Activated CD4-positive, alpha-beta memory T cell treated with anti-CD3 and anti-CD28 coated beads for 36 hours (primary cell): ENCODE measurements at regions of chr17 and their contacts with region 1.

Region 1: DNA sequence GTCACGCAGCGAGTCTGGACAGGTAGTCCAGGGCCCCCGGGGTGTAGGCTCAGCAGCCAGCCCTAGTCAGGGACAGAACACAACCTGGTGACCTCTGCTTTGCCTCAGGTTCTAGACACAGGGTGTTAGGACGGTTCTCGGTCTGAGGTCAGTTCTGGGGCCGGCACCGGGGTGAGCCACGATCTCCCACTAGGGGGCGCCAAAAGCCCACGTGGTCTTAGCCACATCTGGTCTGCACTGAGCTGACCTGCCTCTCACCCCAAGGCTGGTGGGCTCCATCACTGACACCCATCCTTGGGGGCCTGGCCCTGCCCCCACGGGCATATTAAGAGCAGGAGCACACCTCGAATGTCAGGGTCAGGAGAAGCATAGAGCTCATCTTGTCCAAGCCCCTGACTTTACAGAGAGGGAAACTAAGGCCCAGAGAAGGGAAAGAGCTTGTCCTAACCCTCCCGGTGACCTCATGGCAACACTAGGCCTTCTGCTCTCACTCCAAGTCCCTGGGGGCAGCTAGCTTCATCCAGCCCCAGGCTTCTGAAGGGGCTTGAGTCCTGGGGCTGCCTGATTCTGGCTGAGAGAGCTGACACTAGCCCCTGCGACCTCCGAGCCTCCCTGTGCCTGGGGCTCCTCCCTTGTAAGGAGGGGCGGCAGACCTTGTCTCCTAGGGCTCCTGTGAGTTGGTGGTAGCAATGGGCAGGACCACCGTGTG is 9.0 kb downstream of the SLC5A10 start:
- DNase-seq: peak; percentile 89
- H3K4me3 Mint-ChIP-seq: no peak overlapping the region
- H3K27ac Mint-ChIP-seq: no peak overlapping the region
- H3K4me1 Mint-ChIP-seq: peaks cover 23% of the 10 kb centered on the region
- H3K27me3 Mint-ChIP-seq: no peaks in the 10 kb centered on the region

Region 2: GRCh38 chr17:17462048-17462824 is 1498.7 kb before region 1 on chr17:
- CTCF ChIA-PET with region 1: no interaction called
- POLR2A ChIA-PET with region 1: no interaction called
- intact Hi-C with region 1: no loop called
- DNase-seq: no peak
- H3K4me3 Mint-ChIP-seq: no peak overlapping the region
- H3K27ac Mint-ChIP-seq: no peak overlapping the region
- H3K4me1 Mint-ChIP-seq: no peaks in the 10 kb centered on the region
- H3K27me3 Mint-ChIP-seq: peaks cover 14% of the 10 kb centered on the region

Region 3: GRCh38 chr17:18866866-18867813 is 93.8 kb before region 1 on chr17:
- CTCF ChIA-PET with region 1: no interaction called
- POLR2A ChIA-PET with region 1: no interaction called
- intact Hi-C with region 1: no loop called
- DNase-seq: no peak
- H3K4me3 Mint-ChIP-seq: no peak overlapping the region
- H3K27ac Mint-ChIP-seq: no peak overlapping the region
- H3K4me1 Mint-ChIP-seq: peaks cover 11% of the 10 kb centered on the region
- H3K27me3 Mint-ChIP-seq: no peaks in the 10 kb centered on the region

Region 4: GRCh38 chr17:18974407-18975132 is 13.6 kb after region 1 on chr17:
- CTCF ChIA-PET with region 1: interaction called, 17 read pairs
- POLR2A ChIA-PET with region 1: no interaction called
- intact Hi-C with region 1: no loop called
- DNase-seq: peak; percentile 62
- H3K4me3 Mint-ChIP-seq: no peak overlapping the region
- H3K27ac Mint-ChIP-seq: peak overlapping the region; percentile 10
- H3K4me1 Mint-ChIP-seq: peaks cover 12% of the 10 kb centered on the region
- H3K27me3 Mint-ChIP-seq: no peaks in the 10 kb centered on the region

Region 5: GRCh38 chr17:18992454-18993130 is 31.6 kb after region 1 on chr17:
- CTCF ChIA-PET with region 1: interaction called, 20 read pairs
- POLR2A ChIA-PET with region 1: no interaction called
- intact Hi-C with region 1: no loop called
- DNase-seq: peak; percentile 29
- H3K4me3 Mint-ChIP-seq: no peak overlapping the region
- H3K27ac Mint-ChIP-seq: no peak overlapping the region
- H3K4me1 Mint-ChIP-seq: peaks cover 20% of the 10 kb centered on the region
- H3K27me3 Mint-ChIP-seq: no peaks in the 10 kb centered on the region

Region 6: DNA sequence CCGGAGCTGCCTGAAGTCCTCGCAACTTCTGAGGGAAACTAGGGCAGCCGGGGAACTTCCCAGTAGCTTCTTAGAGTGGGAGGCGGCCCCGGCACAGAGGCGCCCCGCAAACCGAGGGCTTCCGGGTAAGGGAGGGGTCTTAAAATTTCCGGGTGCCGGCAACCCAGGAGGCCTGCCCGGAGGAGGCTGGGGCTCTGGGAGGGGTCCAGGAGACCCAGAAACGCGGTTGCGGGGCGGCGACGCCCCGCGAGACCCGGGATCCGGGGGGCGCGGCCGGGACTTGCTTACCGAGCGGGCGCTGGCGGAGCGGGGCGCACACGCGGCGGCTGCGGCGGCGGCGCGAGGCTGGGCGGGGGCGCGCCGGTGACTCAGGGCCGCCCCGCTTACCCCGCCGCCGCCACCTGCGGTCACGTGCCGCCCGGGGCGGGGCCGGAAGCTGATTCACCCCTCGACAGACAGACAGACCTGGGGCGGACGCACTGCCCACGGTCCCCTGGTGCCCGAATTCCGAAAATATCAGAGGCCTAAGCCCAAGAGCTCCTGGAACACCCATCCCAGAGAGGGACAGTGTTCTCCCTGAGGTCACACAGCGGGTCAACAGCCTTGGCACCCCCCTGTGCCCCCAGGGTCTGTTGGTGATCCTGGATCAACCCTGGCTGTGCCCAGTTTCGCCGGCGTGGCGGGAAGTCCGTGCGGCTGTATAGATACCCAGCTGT is 43.6 kb after region 1 on chr17 and contains the start of gene FAM83G:
- CTCF ChIA-PET with region 1: interaction called, 32 read pairs
- POLR2A ChIA-PET with region 1: interaction called, 3 read pairs
- intact Hi-C with region 1: loop called (anchors 2 kb)
- DNase-seq: peak; percentile 94
- H3K4me3 Mint-ChIP-seq: peak within 1 kb of the TSS; percentile 90
- H3K27ac Mint-ChIP-seq: peak within 1 kb of the TSS; percentile 90
- H3K4me1 Mint-ChIP-seq: peaks cover 33% of the 10 kb centered on the region
- H3K27me3 Mint-ChIP-seq: no peaks in the 10 kb centered on the region
- total RNA-seq, gene FAM83G: 12.6 to 14.3 TPM